OCI-LY7 (cell line): ENCODE measurements at regions of chr1 and their contacts with region 1.

Region 1: GRCh38 chr1:221435504-221435904 is 306.4 kb downstream of the DUSP10 start:
- DNase-seq: peak; percentile 54
- H3K4me3 ChIP-seq: no peak overlapping the region
- H3K27ac ChIP-seq: no peak overlapping the region
- H3K4me1 ChIP-seq: no peaks in the 10 kb centered on the region
- CTCF ChIP-seq: peak; percentile 92

Region 2: GRCh38 chr1:220655509-220655908 is 780.0 kb before region 1 on chr1:
- CTCF ChIA-PET with region 1: no interaction called
- POLR2A ChIA-PET with region 1: no interaction called
- intact Hi-C with region 1: no loop called
- DNase-seq: no peak
- H3K4me3 ChIP-seq: no peak overlapping the region
- H3K27ac ChIP-seq: no peak overlapping the region
- H3K4me1 ChIP-seq: no peaks in the 10 kb centered on the region
- CTCF ChIP-seq: no peak

Region 3: GRCh38 chr1:220873868-220874655 is 561.4 kb before region 1 on chr1:
- CTCF ChIA-PET with region 1: no interaction called
- POLR2A ChIA-PET with region 1: no interaction called
- intact Hi-C with region 1: loop called (anchors 2 kb)
- DNase-seq: peak; percentile 34
- H3K4me3 ChIP-seq: no peak overlapping the region
- H3K27ac ChIP-seq: no peak overlapping the region
- H3K4me1 ChIP-seq: no peaks in the 10 kb centered on the region
- CTCF ChIP-seq: peak; percentile 79

Region 4: GRCh38 chr1:221263831-221264767 is 171.4 kb before region 1 on chr1:
- CTCF ChIA-PET with region 1: no interaction called
- POLR2A ChIA-PET with region 1: no interaction called
- intact Hi-C with region 1: loop called (anchors 10 kb)
- DNase-seq: peak; percentile 66
- H3K4me3 ChIP-seq: no peak overlapping the region
- H3K27ac ChIP-seq: no peak overlapping the region
- H3K4me1 ChIP-seq: no peaks in the 10 kb centered on the region
- CTCF ChIP-seq: peak; percentile 77

Region 5: DNA sequence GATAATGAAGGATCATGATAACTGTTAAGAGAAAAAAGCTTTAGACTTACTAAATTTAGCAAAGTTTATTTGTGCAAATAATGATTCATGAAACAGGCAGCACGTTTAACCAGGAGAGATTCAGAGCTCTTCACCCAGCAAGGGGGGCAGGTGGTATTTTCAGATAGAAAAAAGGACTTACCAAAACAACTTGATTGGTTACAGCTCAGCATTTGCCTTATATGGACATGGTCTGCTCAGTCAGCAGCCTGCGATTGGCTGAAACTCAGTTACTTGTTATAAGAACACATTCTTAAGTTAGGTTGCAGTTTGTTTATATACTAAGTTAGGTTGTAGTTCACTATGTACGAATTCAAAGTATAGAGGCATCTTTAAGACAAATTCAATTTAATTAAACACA is 140.8 kb after region 1 on chr1:
- CTCF ChIA-PET with region 1: no interaction called
- POLR2A ChIA-PET with region 1: no interaction called
- intact Hi-C with region 1: no loop called
- DNase-seq: peak; percentile 3
- H3K4me3 ChIP-seq: no peak overlapping the region
- H3K27ac ChIP-seq: no peak overlapping the region
- H3K4me1 ChIP-seq: no peaks in the 10 kb centered on the region
- CTCF ChIP-seq: no peak